Aorta (tissue), 5 donors: ENCODE measurements at regions of chr6 and their contacts with region 1.

Region 1: DNA sequence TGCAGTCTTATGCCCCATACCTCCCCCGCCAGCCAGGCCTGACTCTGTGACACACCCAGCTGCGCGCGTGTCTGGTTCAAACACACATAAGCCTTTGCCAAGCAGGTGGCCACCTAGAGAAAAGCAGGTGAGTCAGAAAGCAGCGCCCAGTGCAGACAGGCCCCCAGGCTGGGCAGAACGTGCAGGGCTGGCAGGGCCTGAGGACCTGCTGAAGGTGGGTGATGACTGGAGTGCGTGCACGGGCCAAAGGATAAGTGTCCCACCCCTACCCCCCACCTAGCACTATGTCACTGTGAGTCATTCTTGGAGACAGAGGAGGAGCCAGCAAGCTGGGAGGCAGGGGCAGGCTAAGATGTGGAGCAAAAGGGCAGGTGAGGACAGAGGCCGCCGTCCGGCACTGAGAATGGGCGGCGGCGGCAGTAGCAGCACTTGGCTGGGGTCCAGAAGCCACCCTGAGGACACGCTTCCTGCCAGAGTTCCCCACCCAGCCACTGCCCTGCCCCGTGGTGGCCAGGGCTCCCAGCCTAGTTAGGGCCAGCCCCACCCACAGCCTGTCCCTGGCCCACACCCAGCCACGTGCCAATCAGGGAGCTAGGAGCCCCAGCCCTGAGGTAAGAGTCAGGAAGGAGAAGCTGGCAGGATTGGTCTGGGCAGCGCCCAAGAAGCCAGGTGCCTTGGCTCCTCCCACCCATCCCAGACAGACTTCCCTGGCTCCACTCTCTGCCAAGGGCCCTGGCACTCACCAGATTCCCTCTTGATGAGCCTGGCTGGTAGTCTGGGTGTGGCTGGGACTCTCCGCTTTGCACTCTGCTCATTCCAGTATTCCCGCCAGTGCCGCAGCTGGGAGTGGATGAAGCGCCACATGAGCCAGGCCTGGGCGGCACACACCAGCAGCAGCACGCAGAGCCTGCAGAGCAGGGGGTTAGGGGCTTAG is 72.7 kb downstream of the TRAM2 start:
- DNase-seq: peak; percentile 91 to 94
- ATAC-seq: peak; percentile 83
- H3K4me3 ChIP-seq: no peak overlapping the region
- H3K27ac ChIP-seq: peak overlapping the region in 1 of 2 donors; percentile 60
- H3K4me1 ChIP-seq: peaks cover 0 to 6% of the 10 kb centered on the region in 2 donors
- H3K27me3 ChIP-seq: no peaks in the 10 kb centered on the region

Region 2: DNA sequence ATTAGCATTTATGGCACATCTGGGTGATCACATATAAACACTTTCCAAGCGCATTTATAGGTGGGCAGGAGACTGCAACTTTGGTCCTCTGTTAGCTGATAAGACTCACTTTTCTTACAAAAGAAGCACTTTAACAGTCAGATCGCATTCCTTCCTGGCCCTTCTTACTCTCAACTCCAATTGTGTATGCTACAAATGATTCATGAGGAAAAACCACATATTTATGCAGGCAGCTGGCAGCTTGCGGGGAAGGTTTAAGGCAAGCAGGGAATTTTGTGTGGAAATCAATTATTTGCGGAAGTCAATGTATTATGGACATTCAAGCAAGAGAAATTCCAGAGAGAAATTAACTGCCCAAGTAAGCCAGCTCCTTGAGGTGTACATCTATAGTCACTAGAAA is 610.8 kb before region 1 on chr6:
- intact Hi-C with region 1: no loop called
- DNase-seq: no peak
- ATAC-seq: no peak
- H3K4me3 ChIP-seq: no peak overlapping the region
- H3K27ac ChIP-seq: no peak overlapping the region
- H3K4me1 ChIP-seq: no peaks in the 10 kb centered on the region
- H3K27me3 ChIP-seq: peaks cover 0 to 1% of the 10 kb centered on the region in 2 donors

Region 3: DNA sequence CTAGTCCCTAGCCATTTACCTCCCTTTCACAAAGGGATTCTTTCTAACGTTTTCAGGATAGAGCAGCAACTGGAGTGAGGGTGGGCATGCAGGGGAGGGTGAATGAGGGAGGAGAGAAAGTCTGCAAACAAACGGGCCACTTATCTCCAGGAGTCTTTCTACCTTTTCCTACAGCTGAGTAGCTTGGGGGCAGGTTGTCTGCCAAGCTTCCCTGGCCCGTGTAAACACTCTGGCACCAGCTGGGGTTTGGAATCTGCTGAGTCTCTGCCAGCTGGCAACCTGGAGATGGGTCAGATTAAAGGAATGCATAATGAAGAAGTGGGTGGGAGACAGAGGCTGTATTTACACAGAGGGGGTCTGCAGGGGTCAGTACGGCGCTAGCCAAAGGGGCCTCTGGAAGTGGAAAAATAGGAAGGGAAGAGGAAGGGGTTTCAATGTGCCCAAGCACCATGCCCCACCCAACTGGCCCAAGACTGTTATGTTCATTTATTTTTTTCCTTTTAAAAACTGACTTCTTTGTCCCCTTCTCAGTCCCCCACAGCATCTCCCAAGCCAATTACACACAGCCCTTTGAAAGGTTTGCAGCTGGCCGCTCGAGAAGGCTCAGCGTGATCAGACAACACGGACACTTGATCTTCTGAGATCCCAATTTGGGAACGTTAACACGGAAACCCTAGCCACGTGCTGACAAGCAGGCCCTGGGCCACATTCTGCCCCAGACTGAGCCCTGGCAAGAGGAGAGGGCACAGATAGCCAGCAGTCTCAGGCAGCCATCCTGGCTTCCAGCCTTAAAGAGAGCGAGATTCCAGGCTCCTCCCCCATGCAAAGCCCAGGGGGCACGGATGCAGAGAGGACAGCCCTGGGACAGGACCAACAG is 47.5 kb after region 1 on chr6:
- intact Hi-C with region 1: no loop called
- DNase-seq: peak; percentile 83 to 90
- ATAC-seq: peak; percentile 82
- H3K4me3 ChIP-seq: no peak overlapping the region
- H3K27ac ChIP-seq: peak overlapping the region in 1 of 2 donors; percentile 85
- H3K4me1 ChIP-seq: peaks cover 5 to 11% of the 10 kb centered on the region in 2 donors
- H3K27me3 ChIP-seq: no peaks in the 10 kb centered on the region

Region 4: GRCh38 chr6:52598123-52598823 is 94.2 kb after region 1 on chr6:
- intact Hi-C with region 1: loop called (anchors 5 kb)
- DNase-seq: peak; percentile 71 to 84
- ATAC-seq: peak; percentile 79
- H3K4me3 ChIP-seq: no peak overlapping the region
- H3K27ac ChIP-seq: peak overlapping the region in 1 of 2 donors; percentile 41
- H3K4me1 ChIP-seq: peaks cover 2 to 3% of the 10 kb centered on the region in 2 donors
- H3K27me3 ChIP-seq: no peaks in the 10 kb centered on the region